ENCODE measurements at regions of chrX and their contacts with region 1.

Region 1: GRCh38 chrX:12843668-12844279 is 23.1 kb upstream of the TLR7 start:
- DNase-seq: peak; percentile 60
- H3K4me3 Mint-ChIP-seq: peak overlapping the region; percentile 83
- H3K27ac Mint-ChIP-seq: peak overlapping the region; percentile 95
- H3K4me1 Mint-ChIP-seq: peaks cover 14% of the 10 kb centered on the region
- H3K27me3 Mint-ChIP-seq: no peaks in the 10 kb centered on the region

Region 2: GRCh38 chrX:12866451-12867377 is 22.9 kb after region 1 on chrX and contains the start of gene TLR7:
- intact Hi-C with region 1: loop called (anchors 2 kb)
- DNase-seq: no peak
- H3K4me3 Mint-ChIP-seq: peak within 1 kb of the TSS; percentile 45
- H3K27ac Mint-ChIP-seq: peak within 1 kb of the TSS; percentile 77
- H3K4me1 Mint-ChIP-seq: peaks cover 13% of the 10 kb centered on the region
- H3K27me3 Mint-ChIP-seq: peaks cover 3% of the 10 kb centered on the region
- total RNA-seq, gene TLR7: 0.12 and 0.17 TPM in 2 replicates

Measured in activated CD4-positive, alpha-beta T cell treated with anti-CD3 and anti-CD28 coated beads, Interleukin-2, amount 10 ng/mL, durations not matched to agents 24 days and 14 days (primary cell).